Adrenal gland (tissue), 19 donors: ENCODE measurements at regions of chr3 and their contacts with region 1.

Region 1: DNA sequence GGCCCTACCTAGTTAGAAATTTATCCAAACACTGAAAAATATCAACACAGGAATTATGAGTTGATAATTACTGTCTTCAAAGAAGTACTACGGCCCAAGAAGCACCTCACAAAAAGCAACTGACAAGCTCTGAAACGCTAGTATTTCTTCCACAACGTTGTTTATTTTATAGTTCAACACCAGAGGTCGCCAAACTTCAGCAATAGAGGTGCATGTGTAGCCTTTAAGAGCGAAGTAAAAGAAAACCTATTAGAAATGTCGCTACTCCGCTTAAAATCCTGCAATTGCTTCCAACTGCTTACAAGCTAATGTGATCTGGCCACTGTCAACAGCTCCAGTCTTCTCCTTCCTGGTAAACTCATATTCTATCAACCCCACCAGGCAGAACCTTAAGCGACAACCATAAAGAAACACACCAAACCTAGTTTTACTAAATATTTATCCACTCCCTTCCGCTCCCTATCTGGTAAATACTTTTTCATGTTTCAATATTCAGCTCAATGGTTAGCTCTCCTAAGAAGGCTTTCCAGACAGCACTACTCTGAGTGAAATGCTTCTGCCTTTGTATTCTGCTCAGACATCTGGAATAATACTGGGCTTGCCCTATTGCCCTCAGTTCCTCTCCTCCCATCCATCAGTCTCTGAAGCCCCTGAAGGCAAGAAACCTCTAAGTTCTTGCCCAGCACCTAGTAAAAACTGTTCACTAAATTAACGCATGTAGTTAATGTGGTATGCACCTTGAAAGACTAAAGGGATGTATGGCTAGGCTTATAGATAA is 110.2 kb downstream of the NR1I2 start:
- DNase-seq: peak; percentile 25 to 64 (median 57)
- H3K4me3 ChIP-seq: no peak overlapping the region
- H3K27ac ChIP-seq: peak overlapping the region in 1 of 5 donors; percentile 21
- H3K4me1 ChIP-seq: peaks cover 0 to 12% of the 10 kb centered on the region in 2 donors
- H3K27me3 ChIP-seq: no peaks in the 10 kb centered on the region
- CTCF ChIP-seq: peak; percentile 48 to 79 (median 78)
- POLR2A ChIP-seq: no peak

Region 2: GRCh38 chr3:120072867-120073525 is 180.9 kb after region 1 on chr3:
- intact Hi-C with region 1: loop called in 1 of 2 experiments (anchors 10 kb)
- DNase-seq: no peak
- H3K4me3 ChIP-seq: no peak overlapping the region
- H3K27ac ChIP-seq: no peak overlapping the region
- H3K4me1 ChIP-seq: peaks cover 0 to 24% of the 10 kb centered on the region in 2 donors
- H3K27me3 ChIP-seq: no peaks in the 10 kb centered on the region
- CTCF ChIP-seq: no peak
- POLR2A ChIP-seq: no peak

Region 3: GRCh38 chr3:120160050-120160449 is 267.9 kb after region 1 on chr3:
- intact Hi-C with region 1: loop called in 1 of 2 experiments (anchors 10 kb)
- DNase-seq: peak in 5 of 7 donors; percentile 44 to 78 (median 52)
- H3K4me3 ChIP-seq: no peak overlapping the region
- H3K27ac ChIP-seq: no peak overlapping the region
- H3K4me1 ChIP-seq: no peaks in the 10 kb centered on the region
- H3K27me3 ChIP-seq: no peaks in the 10 kb centered on the region
- CTCF ChIP-seq: no peak
- POLR2A ChIP-seq: no peak

Region 4: DNA sequence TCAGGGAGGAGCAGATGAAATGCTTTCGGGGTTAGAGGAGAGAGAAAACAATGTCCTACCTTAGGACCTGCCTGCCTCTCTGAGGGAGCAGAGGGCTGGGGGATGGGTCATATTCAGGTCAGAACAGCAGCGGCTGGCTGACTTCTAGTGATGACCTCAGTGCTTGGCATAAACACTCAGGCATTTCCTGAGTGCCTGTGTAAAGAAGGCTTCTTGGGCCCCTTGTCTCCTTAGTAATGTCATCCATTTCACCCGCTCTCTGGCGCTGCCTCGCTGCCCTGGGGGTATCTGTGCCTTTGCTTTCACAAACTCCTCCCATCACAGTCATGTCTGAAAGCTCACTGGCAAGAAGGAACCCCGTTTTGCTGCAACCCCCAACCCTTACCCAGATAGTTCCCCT is 285.0 kb after region 1 on chr3:
- intact Hi-C with region 1: loop called in 1 of 2 experiments (anchors 10 kb)
- DNase-seq: peak; percentile 52 to 82 (median 70)
- H3K4me3 ChIP-seq: no peak overlapping the region
- H3K27ac ChIP-seq: peak overlapping the region in 3 of 5 donors; percentile 8 to 42 (median 28)
- H3K4me1 ChIP-seq: peaks cover 6 to 9% of the 10 kb centered on the region in 2 donors
- H3K27me3 ChIP-seq: no peaks in the 10 kb centered on the region
- CTCF ChIP-seq: no peak
- POLR2A ChIP-seq: no peak